Activated CD4-positive, alpha-beta memory T cell treated with anti-CD3 and anti-CD28 coated beads for 36 hours (primary cell): ENCODE measurements at regions of chr6 and their contacts with region 1.

Region 1: DNA sequence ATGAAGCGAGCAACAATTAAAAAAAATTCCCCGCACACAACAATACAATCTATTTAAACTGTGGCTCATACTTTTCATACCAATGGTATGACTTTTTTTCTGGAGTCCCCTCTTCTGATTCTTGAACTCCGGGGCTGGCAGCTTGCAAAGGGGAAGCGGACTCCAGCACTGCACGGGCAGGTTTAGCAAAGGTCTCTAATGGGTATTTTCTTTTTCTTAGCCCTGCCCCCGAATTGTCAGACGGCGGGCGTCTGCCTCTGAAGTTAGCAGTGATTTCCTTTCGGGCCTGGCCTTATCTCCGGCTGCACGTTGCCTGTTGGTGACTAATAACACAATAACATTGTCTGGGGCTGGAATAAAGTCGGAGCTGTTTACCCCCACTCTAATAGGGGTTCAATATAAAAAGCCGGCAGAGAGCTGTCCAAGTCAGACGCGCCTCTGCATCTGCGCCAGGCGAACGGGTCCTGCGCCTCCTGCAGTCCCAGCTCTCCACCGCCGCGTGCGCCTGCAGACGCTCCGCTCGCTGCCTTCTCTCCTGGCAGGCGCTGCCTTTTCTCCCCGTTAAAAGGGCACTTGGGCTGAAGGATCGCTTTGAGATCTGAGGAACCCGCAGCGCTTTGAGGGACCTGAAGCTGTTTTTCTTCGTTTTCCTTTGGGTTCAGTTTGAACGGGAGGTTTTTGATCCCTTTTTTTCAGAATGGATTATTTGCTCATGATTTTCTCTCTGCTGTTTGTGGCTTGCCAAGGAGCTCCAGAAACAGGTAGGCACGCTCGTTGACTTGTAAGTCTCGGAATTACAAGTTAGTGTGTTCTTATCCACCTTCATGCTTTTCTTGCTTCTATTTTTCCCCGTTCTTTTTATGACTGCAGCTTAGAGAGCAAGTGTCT is at the start of gene EDN1:
- DNase-seq: peak; percentile 70
- H3K4me3 Mint-ChIP-seq: peak within 1 kb of the TSS; percentile 68
- H3K27ac Mint-ChIP-seq: no peak within 1 kb of the TSS
- H3K4me1 Mint-ChIP-seq: peaks cover 16% of the 10 kb centered on the region
- H3K27me3 Mint-ChIP-seq: peaks cover 36% of the 10 kb centered on the region
- total RNA-seq, gene EDN1: not detected

Region 2: GRCh38 chr6:11585426-11586016 is 704.7 kb before region 1 on chr6:
- CTCF ChIA-PET with region 1: interaction called, 3 read pairs
- POLR2A ChIA-PET with region 1: no interaction called
- intact Hi-C with region 1: loop called (anchors 1 kb)
- DNase-seq: no peak
- H3K4me3 Mint-ChIP-seq: no peak overlapping the region
- H3K27ac Mint-ChIP-seq: no peak overlapping the region
- H3K4me1 Mint-ChIP-seq: no peaks in the 10 kb centered on the region
- H3K27me3 Mint-ChIP-seq: peaks cover 10% of the 10 kb centered on the region

Region 3: GRCh38 chr6:11653028-11653583 is 637.1 kb before region 1 on chr6:
- CTCF ChIA-PET with region 1: interaction called, 82 read pairs
- POLR2A ChIA-PET with region 1: no interaction called
- intact Hi-C with region 1: loop called (anchors 1 kb)
- DNase-seq: peak; percentile 71
- H3K4me3 Mint-ChIP-seq: no peak overlapping the region
- H3K27ac Mint-ChIP-seq: no peak overlapping the region
- H3K4me1 Mint-ChIP-seq: peaks cover 13% of the 10 kb centered on the region
- H3K27me3 Mint-ChIP-seq: peaks cover 9% of the 10 kb centered on the region

Region 4: DNA sequence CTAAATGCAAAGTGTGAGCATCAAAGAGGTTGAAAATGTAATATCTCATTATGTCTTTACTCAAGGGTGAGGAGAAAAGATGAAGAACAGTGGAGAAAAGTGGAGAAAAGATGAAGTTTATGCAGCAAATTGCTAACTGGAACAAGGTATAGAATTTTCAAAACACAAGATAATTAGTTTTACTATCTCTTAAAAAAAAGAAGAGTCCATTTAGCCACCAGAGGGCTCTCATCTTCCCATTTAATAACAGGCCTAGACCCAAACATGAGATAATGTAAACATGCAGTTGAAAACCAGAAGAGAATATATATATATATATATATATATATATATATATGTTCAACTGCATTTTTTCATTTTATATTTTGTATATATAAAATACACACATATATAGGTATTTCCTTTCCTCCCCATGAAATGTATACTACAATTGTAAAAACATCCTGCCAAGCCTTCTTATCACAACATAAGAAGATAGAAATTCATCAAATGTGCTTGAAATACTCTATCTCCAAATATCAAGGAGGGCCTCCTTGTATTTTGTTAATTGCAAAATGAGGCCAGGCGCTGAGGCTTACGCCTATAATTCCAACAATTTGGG is 590.0 kb before region 1 on chr6:
- CTCF ChIA-PET with region 1: interaction called, 8 read pairs
- POLR2A ChIA-PET with region 1: no interaction called
- intact Hi-C with region 1: loop called (anchors 1 kb)
- DNase-seq: no peak
- H3K4me3 Mint-ChIP-seq: no peak overlapping the region
- H3K27ac Mint-ChIP-seq: no peak overlapping the region
- H3K4me1 Mint-ChIP-seq: peaks cover 10% of the 10 kb centered on the region
- H3K27me3 Mint-ChIP-seq: no peaks in the 10 kb centered on the region

Region 5: GRCh38 chr6:12150812-12151432 is 139.3 kb before region 1 on chr6:
- CTCF ChIA-PET with region 1: interaction called, 6 read pairs
- POLR2A ChIA-PET with region 1: interaction called, 4 read pairs
- intact Hi-C with region 1: loop called (anchors 2 kb)
- DNase-seq: peak; percentile 49
- H3K4me3 Mint-ChIP-seq: no peak overlapping the region
- H3K27ac Mint-ChIP-seq: no peak overlapping the region
- H3K4me1 Mint-ChIP-seq: peaks cover 15% of the 10 kb centered on the region
- H3K27me3 Mint-ChIP-seq: no peaks in the 10 kb centered on the region

Region 6: GRCh38 chr6:12605888-12606345 is 315.7 kb after region 1 on chr6:
- CTCF ChIA-PET with region 1: interaction called, 4 read pairs
- POLR2A ChIA-PET with region 1: no interaction called
- intact Hi-C with region 1: loop called (anchors 1 kb)
- DNase-seq: peak; percentile 47
- H3K4me3 Mint-ChIP-seq: no peak overlapping the region
- H3K27ac Mint-ChIP-seq: no peak overlapping the region
- H3K4me1 Mint-ChIP-seq: no peaks in the 10 kb centered on the region
- H3K27me3 Mint-ChIP-seq: peaks cover 16% of the 10 kb centered on the region